ENCODE measurements at regions of chr17 and their contacts with region 1.

Region 1: DNA sequence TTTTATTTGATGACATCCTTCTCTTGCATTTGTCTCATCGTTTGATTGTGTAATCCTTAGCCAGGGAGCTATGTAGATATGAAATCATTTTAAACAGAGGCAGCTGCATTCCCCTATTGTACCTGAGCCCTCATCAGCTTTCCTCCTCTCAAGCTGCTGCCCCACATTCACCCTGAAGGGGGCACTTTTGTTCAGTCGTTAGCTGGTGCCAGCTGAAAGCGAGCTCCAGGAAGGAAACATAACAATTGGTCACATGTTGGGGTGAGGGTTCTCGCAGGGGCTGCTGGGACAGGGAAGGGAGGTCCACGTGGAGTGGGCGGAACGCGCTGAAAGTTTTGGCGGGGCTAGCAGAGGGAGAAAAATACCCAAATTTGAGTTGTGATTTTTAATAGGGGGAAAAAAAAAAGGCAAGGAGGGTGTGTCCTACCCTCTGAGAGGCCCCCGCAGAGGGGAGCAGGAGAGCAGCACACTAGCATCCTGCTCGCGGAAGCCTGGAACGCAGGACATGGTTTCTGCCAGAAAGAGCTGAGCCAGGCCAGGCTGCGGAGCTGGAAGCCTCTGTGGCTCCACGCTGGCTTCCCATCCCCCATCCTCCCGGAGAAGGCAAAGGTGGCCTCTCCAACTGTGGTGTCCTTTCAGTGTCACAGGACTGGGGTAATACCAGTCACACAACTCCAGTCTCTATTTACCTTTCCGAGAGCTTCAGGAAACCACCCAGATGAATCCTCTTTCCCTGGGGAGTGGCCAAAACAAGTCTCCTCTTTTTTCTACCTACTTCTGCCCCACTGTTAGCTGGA is 8.5 kb upstream of the MSL1 start:
- DNase-seq: peak; percentile 89
- H3K4me3 Mint-ChIP-seq: peak overlapping the region; percentile 82
- H3K27ac Mint-ChIP-seq: peak overlapping the region; percentile 94
- H3K4me1 Mint-ChIP-seq: peaks cover 43% of the 10 kb centered on the region
- H3K27me3 Mint-ChIP-seq: peaks cover under 1% of the 10 kb centered on the region

Region 2: GRCh38 chr17:39952680-39953470 is 160.4 kb before region 1 on chr17:
- intact Hi-C with region 1: no loop called
- DNase-seq: peak; percentile 79
- H3K4me3 Mint-ChIP-seq: peak overlapping the region; percentile 79
- H3K27ac Mint-ChIP-seq: peak overlapping the region; percentile 77
- H3K4me1 Mint-ChIP-seq: peaks cover 38% of the 10 kb centered on the region
- H3K27me3 Mint-ChIP-seq: peaks cover 3% of the 10 kb centered on the region

Region 3: GRCh38 chr17:40068917-40069750 is 44.2 kb before region 1 on chr17:
- intact Hi-C with region 1: loop called (anchors 2 kb)
- DNase-seq: peak; percentile 55
- H3K4me3 Mint-ChIP-seq: peak overlapping the region; percentile 77
- H3K27ac Mint-ChIP-seq: peak overlapping the region; percentile 79
- H3K4me1 Mint-ChIP-seq: peaks cover 44% of the 10 kb centered on the region
- H3K27me3 Mint-ChIP-seq: peaks cover 17% of the 10 kb centered on the region

Region 4: GRCh38 chr17:40139566-40140058 is 26.3 kb after region 1 on chr17:
- intact Hi-C with region 1: loop called (anchors 1 kb)
- DNase-seq: no peak
- H3K4me3 Mint-ChIP-seq: peak overlapping the region; percentile 98
- H3K27ac Mint-ChIP-seq: peak overlapping the region; percentile 98
- H3K4me1 Mint-ChIP-seq: peaks cover 34% of the 10 kb centered on the region
- H3K27me3 Mint-ChIP-seq: peaks cover 2% of the 10 kb centered on the region

Region 5: DNA sequence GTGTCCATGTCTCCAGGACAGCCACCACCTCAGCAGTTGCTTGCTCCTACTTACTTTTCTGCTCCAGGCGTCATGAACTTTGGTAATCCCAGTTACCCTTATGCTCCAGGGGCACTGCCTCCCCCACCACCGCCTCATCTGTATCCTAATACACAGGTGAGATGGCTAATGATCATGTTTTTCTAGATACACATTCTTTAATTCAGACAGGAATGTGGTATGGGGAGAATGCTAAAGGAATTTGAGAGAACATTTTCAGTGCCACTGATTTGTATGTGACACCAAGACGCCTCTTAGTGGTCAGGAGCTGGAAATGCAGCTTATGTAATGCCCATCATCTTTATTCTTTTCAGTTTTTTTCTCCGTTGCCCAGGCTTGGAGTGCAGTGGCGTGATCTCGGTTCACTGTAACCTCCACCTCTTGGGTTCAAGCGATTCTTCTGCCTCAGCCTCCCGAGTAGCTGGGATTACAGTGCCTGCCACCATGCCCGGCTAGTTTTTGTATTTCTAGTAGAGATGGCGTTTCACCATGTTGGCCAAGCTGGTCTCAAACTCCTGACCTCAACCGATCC is 55.0 kb after region 1 on chr17:
- intact Hi-C with region 1: loop called (anchors 1 kb)
- DNase-seq: no peak
- H3K4me3 Mint-ChIP-seq: no peak overlapping the region
- H3K27ac Mint-ChIP-seq: peak overlapping the region; percentile 7
- H3K4me1 Mint-ChIP-seq: peaks cover 10% of the 10 kb centered on the region
- H3K27me3 Mint-ChIP-seq: no peaks in the 10 kb centered on the region

Region 6: GRCh38 chr17:40191237-40192208 is 78.2 kb after region 1 on chr17:
- intact Hi-C with region 1: loop called (anchors 1 kb)
- DNase-seq: peak; percentile 53
- H3K4me3 Mint-ChIP-seq: peak overlapping the region; percentile 92
- H3K27ac Mint-ChIP-seq: peak overlapping the region; percentile 79
- H3K4me1 Mint-ChIP-seq: peaks cover 16% of the 10 kb centered on the region
- H3K27me3 Mint-ChIP-seq: peaks cover 2% of the 10 kb centered on the region

Region 7: DNA sequence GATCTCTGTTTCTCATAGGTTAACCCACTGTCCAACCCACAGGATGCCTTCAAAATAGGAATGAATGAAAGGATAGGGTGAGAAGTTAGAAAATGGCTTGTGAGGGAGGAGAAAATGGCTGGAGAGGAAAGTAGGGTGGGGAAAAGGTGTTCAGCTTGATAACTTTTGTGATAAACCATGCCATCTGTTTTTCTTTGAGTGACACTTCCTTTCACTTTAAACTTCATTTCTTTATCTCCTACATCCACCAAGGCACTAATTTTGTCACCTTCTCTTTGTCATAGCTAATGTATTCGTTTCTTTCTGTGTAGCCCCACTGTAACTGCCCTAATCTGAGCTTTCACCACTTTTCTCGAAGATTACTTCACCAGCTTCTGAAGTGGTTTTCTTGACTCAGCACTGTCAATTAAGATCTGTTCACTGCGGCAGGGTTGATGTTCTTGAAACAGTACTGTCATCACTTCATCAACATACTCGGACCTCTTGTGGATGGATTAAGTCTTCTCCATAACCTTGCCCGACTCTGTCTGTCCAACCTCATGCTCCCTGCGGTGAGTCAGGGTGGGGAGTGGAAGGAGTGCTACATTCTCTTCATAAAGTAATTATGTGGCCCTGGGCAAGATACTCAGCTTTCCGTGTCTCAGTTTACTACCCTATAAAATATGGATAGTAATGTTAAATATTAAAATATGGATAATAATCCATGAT is 714.6 kb after region 1 on chr17:
- intact Hi-C with region 1: no loop called
- DNase-seq: no peak
- H3K4me3 Mint-ChIP-seq: no peak overlapping the region
- H3K27ac Mint-ChIP-seq: no peak overlapping the region
- H3K4me1 Mint-ChIP-seq: peaks cover 8% of the 10 kb centered on the region
- H3K27me3 Mint-ChIP-seq: peaks cover 5% of the 10 kb centered on the region

Measured in activated T-helper 1 cell treated with anti-CD3 and anti-CD28 coated beads, Interleukin-12 subunit alpha, Interleukin-12 subunit beta, Interleukin-2, Interleukin-4 antibody, amounts not matched to agents 30 ng/mL and 10 ng/mL and 1 ng/mL, durations not matched to agents 14 hours and 24 hours and 36 hours (primary cell).